ENCODE measurements at regions of chr14 and their contacts with region 1.

Region 1: DNA sequence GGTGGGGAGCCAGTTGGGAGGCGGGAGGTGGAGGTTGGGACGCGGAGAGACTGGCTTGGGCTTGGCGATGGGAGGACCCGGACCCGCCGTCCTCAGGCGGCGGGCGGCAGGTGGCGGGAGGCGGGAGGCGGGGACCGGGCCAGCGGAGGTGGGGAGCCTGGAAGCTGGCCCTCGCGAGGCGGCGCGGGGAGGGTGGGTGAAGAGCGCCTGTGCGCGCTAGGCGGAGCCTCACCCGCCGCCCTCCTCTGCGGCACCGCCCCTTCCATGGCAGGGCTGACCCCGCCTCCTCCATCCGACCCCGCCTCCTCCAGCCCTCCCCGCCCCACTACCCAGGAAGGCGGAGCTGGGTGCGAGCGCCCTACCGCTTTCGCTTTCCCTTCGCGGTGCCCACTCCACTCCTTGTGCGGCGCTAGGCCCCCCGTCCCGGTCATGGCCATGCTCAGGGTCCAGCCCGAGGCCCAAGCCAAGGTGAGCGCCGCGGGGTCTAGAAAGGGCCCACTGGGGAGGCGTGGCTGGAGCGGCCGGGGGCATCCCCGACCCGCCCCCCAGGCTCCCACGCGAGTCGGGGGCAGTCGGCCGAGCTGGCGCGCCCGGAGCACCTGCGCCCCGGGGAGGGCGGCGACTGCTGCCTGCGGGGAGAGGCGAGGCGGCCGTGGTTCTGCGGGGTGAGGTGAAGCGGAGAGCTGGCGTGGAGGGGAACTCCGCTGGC is at the start of gene PSME1:
- DNase-seq: peak; percentile 96
- ATAC-seq: peak; percentile 97
- H3K4me3 Mint-ChIP-seq: peak within 1 kb of the TSS; percentile 97
- H3K27ac Mint-ChIP-seq: peak within 1 kb of the TSS; percentile 92
- H3K4me1 Mint-ChIP-seq: peaks cover 56% of the 10 kb centered on the region
- H3K27me3 Mint-ChIP-seq: no peaks in the 10 kb centered on the region
- CTCF ChIP-seq: no peak
- total RNA-seq, gene PSME1: 451 to 460 TPM

Region 2: DNA sequence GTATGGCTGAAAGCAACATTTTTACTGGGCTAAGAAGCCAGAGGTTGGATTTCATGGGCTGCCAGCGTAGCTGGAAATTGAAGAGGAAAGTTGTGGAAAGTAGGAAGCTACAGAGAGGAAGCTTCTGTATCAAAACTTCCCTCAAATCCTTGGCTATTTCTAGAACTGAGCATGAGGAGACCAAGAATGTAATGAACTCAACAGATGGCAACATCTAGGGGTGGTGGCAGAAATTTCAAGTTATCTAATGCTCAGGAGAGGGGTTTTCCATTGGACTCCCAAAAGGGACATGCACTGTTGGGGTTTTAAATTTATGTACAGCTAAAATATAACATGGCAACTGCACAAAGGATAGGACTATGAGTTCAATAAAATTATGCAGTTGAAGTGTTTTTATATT is 348.6 kb before region 1 on chr14:
- CTCF ChIA-PET with region 1: no interaction called
- POLR2A ChIA-PET with region 1: no interaction called
- intact Hi-C with region 1: no loop called
- DNase-seq: no peak
- ATAC-seq: no peak
- H3K4me3 Mint-ChIP-seq: no peak overlapping the region
- H3K27ac Mint-ChIP-seq: no peak overlapping the region
- H3K4me1 Mint-ChIP-seq: no peaks in the 10 kb centered on the region
- H3K27me3 Mint-ChIP-seq: peaks cover 30% of the 10 kb centered on the region
- CTCF ChIP-seq: no peak

Region 3: DNA sequence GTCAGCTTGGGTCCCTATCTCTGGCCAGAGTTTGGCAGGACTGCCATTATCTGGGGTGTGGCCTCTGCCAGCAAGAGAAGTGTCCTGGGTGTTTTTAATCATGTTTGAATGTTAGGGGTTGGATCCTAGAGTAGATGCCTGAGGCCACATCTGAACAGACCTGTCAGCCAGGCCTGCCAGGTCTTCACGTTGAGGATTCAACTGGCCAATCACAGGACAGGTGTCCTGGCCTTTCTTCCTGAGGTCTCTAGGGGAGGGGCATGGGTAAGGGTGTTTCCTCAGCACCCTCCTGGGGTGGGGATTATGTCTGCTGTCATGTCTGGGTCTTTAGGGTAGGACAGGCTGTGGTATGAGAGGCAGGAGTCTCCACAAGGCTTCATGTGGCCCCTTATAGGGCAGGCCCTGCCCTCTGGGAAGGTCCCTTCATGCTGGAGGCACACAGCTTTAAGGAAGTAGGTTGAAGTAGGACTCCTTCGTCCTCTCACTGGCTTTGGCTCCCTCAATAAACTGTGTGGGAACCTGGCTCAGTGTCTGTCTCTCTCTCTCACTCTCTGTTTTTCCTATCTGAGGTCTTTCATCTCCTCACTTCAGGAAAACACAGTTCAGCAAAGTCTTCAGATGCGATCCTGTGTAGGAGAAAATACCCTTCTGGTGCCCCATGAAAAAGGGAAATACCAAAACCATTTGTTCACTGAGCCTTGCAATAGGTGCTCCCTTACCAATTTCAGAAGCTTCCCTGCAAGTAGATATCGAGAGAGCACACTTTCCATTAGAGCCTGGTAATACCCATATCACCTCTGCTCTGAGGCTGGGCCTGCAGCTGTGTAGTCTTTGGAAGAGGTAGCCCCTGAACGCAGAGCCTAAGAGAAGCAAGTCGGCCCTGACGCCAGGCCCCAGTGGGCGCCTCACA is 12.2 kb before region 1 on chr14:
- CTCF ChIA-PET with region 1: interaction called, 5 read pairs
- POLR2A ChIA-PET with region 1: interaction called, 30 read pairs
- intact Hi-C with region 1: no loop called
- DNase-seq: no peak
- ATAC-seq: peak; percentile 61
- H3K4me3 Mint-ChIP-seq: no peak overlapping the region
- H3K27ac Mint-ChIP-seq: peak overlapping the region; percentile 52
- H3K4me1 Mint-ChIP-seq: no peaks in the 10 kb centered on the region
- H3K27me3 Mint-ChIP-seq: no peaks in the 10 kb centered on the region
- CTCF ChIP-seq: no peak

Region 4: DNA sequence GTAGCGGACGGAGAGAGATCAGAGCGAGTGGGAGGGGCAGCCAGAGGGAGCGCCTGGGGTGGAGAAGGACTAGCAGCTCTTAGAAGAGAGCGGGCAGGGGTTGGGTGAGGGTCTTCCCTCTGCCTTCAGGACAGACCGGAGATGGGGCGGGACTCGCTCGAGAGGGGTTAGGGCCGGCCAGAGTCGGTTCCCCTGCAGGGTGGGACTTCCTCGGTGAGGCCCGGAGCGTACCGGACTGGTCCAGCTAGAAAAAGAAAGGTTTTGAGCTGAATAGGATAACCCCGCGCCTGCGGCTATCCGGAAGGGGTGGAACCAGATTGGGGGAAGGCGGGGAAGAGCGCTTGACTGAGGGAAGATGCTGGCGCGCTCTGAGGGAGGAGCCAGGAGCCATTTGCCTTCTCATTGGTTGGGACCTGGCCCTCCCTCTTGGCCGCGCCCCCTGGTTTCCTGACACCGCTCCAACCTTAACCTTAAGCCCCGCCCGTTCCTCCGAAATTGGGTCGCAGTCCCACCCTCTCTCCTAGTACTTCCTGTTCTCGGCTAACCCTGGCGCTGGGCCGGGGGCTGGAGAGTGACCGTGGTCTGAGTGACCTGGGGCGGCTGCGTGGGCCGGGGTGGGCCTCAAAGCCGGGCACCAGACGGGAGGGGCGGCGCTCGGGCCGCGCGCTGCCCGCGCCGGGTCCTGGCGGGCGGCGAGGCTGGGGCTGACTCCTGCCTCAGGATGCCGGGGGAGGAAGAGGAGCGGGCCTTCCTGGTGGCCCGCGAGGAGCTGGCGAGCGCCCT is 11.2 kb after region 1 on chr14 and contains the start of gene RNF31:
- CTCF ChIA-PET with region 1: interaction called, 18 read pairs
- POLR2A ChIA-PET with region 1: interaction called, 46 read pairs
- intact Hi-C with region 1: no loop called
- DNase-seq: peak; percentile 100
- ATAC-seq: peak; percentile 87
- H3K4me3 Mint-ChIP-seq: peak within 1 kb of the TSS; percentile 89
- H3K27ac Mint-ChIP-seq: peak within 1 kb of the TSS; percentile 98
- H3K4me1 Mint-ChIP-seq: peaks cover 58% of the 10 kb centered on the region
- H3K27me3 Mint-ChIP-seq: no peaks in the 10 kb centered on the region
- CTCF ChIP-seq: no peak
- total RNA-seq, gene RNF31: 71.6 to 75.0 TPM

Region 5: GRCh38 chr14:24155100-24155499 is 19.1 kb after region 1 on chr14:
- CTCF ChIA-PET with region 1: interaction called, 29 read pairs
- POLR2A ChIA-PET with region 1: interaction called, 38 read pairs
- intact Hi-C with region 1: no loop called
- DNase-seq: no peak
- ATAC-seq: no peak
- H3K4me3 Mint-ChIP-seq: no peak overlapping the region
- H3K27ac Mint-ChIP-seq: peak overlapping the region; percentile 59
- H3K4me1 Mint-ChIP-seq: peaks cover 11% of the 10 kb centered on the region
- H3K27me3 Mint-ChIP-seq: no peaks in the 10 kb centered on the region
- CTCF ChIP-seq: no peak

Measured in activated CD8-positive, alpha-beta T cell treated with anti-CD3 and anti-CD28 coated beads for 36 hours (primary cell).